Breast epithelium (tissue), 4 donors: ENCODE measurements at regions of chr7 and their contacts with region 1.

Region 1: GRCh38 chr7:8605221-8605620 is 171.8 kb downstream of the NXPH1 start:
- DNase-seq: no peak
- H3K4me3 ChIP-seq: no peak overlapping the region
- H3K27ac ChIP-seq: no peak overlapping the region
- H3K4me1 ChIP-seq: no peaks in the 10 kb centered on the region
- H3K27me3 ChIP-seq: no peaks in the 10 kb centered on the region
- CTCF ChIP-seq: no peak
- POLR2A ChIP-seq: no peak

Region 2: GRCh38 chr7:8134089-8134733 is 471.0 kb before region 1 on chr7:
- intact Hi-C with region 1: loop called (anchors 10 kb)
- DNase-seq: no peak
- H3K4me3 ChIP-seq: no peak overlapping the region
- H3K27ac ChIP-seq: no peak overlapping the region
- H3K4me1 ChIP-seq: no peaks in the 10 kb centered on the region
- H3K27me3 ChIP-seq: no peaks in the 10 kb centered on the region
- CTCF ChIP-seq: no peak
- POLR2A ChIP-seq: no peak